Dendritic cell treated with granulocyte-macrophage colony-stimulating factor and Interleukin-4, amounts not matched to agents 40 ng/mL and 50 ng/mL, for 4 days (primary cell): ENCODE measurements at regions of chr10 and their contacts with region 1.

Region 1: DNA sequence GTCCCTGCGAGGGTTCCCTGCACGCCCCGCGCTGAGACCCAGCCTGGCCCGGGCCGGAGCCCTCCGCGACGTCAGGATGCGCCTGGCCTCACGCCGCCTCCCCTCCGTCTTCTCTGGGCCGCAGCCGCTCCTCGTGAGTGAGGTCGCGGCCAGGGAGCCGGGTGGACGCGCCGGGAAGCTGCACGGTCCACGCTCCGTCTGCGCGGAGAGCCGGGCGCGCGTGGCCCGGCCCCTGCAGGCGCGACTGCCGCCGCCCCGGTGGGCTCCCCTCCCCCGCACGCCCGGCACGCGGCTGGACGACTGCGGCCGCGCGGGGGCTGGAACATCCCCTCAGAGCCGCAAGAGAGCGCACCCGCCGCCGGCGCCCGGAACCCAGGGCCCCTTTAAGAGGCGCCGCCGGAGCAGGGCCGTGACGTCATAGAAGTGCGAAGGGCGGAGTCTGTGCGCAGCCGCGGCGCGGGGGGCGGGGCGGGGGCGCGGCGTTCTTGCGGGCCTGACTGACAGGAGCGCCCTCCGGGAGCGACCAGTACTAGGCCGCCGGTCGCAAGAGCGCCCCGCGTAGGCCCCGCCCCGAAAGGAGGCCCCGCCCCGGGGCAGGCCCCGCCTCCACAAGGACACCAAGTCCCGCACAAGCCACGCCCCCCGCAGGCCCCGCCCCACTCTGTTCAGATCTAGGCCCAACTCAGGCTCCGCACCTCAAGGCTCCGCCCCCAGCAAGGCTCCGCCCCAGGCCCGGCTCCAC is 445 bp upstream of the INPP5A start:
- H3K4me3 Mint-ChIP-seq: peak overlapping the region; percentile 66
- H3K27ac Mint-ChIP-seq: peak overlapping the region; percentile 63
- H3K4me1 Mint-ChIP-seq: peaks cover 53% of the 10 kb centered on the region
- H3K27me3 Mint-ChIP-seq: peaks cover 10% of the 10 kb centered on the region

Region 2: GRCh38 chr10:132307823-132308587 is 229.1 kb before region 1 on chr10 and contains the start of gene STK32C:
- intact Hi-C with region 1: loop called (anchors 2 kb)
- H3K4me3 Mint-ChIP-seq: peak within 1 kb of the TSS; percentile 93
- H3K27ac Mint-ChIP-seq: peak within 1 kb of the TSS; percentile 78
- H3K4me1 Mint-ChIP-seq: peaks cover 69% of the 10 kb centered on the region
- H3K27me3 Mint-ChIP-seq: peaks cover 33% of the 10 kb centered on the region

Region 3: DNA sequence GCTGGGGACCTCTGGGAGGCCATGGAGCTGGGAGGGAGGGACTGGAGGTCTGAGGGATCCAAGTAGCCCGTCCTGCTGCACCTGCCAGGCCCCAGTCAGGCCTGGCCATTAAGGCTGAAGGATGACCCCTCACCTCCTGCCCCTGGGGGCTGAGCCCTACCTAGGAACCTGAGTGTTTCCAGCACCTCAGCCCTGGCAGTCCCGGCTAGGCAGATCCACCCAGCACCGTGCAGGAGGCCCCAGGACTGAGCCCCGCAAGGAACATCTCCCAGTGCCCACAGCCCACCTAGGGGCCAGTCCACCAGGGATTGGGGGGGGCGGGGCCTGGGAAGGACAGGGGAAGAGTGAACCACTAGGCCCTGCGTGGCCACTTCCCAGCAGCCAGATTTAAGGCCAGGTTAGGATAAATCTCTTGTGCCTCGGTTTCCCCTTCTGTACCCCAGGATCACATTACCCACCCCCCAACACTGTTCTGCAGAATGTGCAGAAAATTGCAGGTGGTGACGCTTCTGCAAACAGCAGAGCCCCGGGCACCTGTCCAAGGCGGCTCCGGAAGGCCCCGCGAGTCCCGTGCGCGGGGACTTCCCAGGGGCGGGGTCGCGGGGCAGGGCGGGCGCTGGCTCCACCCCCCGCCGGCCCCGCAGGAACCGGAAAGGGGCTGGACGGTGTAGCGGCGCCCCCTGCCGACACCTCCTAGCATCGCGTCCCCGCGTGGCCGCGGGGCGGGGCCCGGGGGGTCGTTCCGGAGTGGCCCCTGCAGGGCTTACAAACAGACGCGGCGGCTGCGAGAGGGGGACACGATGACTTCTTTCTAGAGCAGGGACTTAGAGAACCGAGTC is 84.3 kb before region 1 on chr10:
- intact Hi-C with region 1: loop called (anchors 10 kb)
- H3K4me3 Mint-ChIP-seq: peak overlapping the region; percentile 42
- H3K27ac Mint-ChIP-seq: peak overlapping the region; percentile 56
- H3K4me1 Mint-ChIP-seq: peaks cover 41% of the 10 kb centered on the region
- H3K27me3 Mint-ChIP-seq: peaks cover 14% of the 10 kb centered on the region

Region 4: GRCh38 chr10:132571650-132572535 is 34.8 kb after region 1 on chr10:
- intact Hi-C with region 1: loop called (anchors 1 kb)
- H3K4me3 Mint-ChIP-seq: no peak overlapping the region
- H3K27ac Mint-ChIP-seq: no peak overlapping the region
- H3K4me1 Mint-ChIP-seq: no peaks in the 10 kb centered on the region
- H3K27me3 Mint-ChIP-seq: peaks cover 12% of the 10 kb centered on the region

Region 5: GRCh38 chr10:132588301-132589013 is 51.3 kb after region 1 on chr10:
- intact Hi-C with region 1: loop called (anchors 1 kb)
- H3K4me3 Mint-ChIP-seq: peak overlapping the region; percentile 67
- H3K27ac Mint-ChIP-seq: peak overlapping the region; percentile 94
- H3K4me1 Mint-ChIP-seq: peaks cover 73% of the 10 kb centered on the region
- H3K27me3 Mint-ChIP-seq: peaks cover 11% of the 10 kb centered on the region